Right ventricle myocardium inferior (tissue), 1 donor: ENCODE measurements at regions of chr13 and their contacts with region 1.

Region 1: GRCh38 chr13:97855570-97856303 is 97.7 kb upstream of the IPO5 start:
- DNase-seq: peak; percentile 72
- ATAC-seq: peak; percentile 75

Region 2: DNA sequence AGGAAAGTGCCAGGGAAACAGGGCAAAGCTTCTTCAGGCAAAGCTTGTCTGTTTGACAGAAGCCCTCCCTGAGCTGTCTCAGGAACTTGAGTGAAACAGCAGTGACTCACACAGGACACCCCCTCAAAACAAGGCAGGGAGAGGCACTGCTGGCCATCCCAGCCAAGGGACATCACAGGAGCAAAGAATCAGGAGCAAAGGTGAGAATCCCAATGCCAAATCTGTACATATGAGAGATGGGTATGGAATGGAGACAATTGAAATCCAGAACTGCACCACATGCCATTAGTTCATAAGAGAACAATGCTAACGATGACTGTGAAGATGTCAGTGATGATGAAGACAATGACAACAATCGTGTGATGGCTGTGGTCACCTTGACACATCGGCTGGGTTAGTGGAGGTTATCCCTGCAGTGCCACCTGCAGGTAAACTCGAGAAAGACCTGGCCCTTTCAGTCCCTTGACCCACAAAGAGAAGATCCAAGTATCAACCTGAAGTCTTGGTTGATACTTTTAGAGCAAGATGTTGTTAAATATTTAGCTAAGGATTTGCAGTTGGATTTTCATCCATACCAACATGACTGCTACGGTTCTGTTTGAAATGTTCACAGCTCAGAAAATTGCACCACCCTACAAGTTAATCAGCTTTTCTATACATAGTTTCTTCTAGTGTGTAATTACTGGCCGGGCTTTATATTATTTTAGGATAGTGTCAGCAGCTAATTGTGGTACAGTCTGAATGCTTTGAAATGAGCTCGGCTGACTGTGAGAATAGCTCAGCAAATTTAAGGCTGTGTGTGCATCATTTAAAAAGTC is 55.8 kb after region 1 on chr13:
- intact Hi-C with region 1: loop called (anchors 5 kb)
- DNase-seq: no peak
- ATAC-seq: no peak

Region 3: DNA sequence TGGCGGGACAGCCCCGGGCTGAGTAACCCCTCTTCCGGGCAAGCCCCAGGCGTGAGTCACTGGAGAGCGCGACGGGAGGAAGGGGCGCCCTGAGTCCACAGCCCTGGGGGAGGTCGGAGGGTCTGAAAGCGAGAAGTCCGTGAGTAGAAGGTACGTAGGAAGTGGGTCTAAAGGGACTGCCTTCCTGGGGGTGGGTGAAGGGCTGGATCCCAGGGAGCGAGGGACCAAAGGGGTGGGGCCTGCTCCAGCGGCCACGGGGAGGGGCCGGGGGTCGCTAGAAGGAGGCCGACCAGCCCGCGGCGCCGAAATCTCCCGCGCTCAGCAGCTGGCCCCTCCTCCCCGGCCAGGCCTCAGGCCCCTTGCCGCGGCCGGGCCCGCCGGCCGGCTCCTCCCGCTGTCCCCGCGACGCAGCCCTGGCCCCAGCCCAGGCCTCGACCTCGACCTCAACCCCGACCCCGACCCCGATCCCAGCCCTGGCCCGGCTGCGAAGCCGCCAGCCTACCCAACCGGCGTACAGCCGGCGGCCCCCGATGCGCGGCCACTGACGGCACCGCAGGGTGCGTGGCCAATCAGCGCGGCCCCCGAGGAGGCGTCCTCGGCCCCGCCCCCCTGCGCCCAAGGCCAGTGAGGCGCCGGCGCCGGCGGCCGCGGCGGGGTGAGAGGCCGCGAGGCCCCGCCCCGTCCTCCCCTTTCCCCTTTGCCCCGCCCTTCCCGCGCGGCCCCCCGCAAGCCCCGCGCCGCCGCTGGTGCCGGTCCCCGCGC is 120.3 kb after region 1 on chr13:
- intact Hi-C with region 1: loop called (anchors 2 kb)
- DNase-seq: peak; percentile 96
- ATAC-seq: peak; percentile 100